OCI-LY7 (cell line): ENCODE measurements at regions of chr12 and their contacts with region 1.

Region 1: DNA sequence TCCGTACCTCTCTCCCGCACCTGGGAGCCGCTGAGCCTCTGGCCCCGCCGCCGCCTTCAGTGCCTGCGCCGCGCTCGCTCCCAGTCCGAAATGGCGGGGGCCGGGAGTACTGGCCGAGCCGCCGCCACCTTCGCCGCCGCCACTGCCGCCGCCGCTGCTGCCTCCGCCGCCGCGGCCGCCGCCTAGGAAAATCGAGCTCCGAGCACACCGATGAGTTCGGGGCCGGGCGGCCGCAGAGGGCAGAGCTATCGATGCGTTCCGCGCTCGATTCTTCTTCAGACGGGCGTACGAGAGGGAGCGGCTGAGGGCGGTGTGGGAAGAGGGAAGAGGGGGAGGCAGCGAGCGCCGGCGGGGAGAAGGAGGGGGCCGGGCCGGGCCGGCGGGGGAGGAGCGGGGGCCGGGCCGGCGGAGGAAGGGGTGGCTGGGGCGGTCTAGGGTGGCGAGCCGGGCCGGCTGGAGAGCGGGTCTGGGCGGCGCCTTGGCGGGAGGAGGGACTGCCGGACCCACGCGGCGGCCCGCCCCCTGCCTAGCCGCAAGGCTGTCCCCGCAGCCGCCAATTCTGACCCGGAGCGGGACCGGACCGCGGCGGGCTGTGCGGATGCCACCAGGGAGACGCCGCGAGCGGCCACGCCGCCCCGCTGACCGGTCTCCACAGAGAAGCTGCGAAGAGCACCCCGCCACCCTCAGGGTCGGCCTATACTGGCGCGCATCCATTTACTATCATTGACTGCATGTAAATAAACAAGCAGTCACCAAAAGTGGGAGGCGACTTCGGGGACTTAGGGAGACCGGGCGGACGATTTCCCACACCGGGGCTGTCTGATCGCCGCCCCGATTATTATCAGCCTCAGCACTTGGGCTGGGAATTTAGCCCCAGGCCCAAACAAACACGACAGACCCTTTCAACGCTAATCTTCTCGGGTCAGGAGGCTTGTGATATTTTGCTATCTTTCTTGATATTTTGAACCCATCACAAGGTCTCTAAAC is at the start of gene KRAS:
- DNase-seq: peak; percentile 97
- H3K4me3 ChIP-seq: peak within 1 kb of the TSS; percentile 99
- H3K27ac ChIP-seq: peak within 1 kb of the TSS; percentile 55
- H3K4me1 ChIP-seq: peaks cover 56% of the 10 kb centered on the region
- CTCF ChIP-seq: no peak
- total RNA-seq, gene KRAS: 8.6 and 14.7 TPM in 2 replicates

Region 2: GRCh38 chr12:24948757-24949722 is 302.0 kb before region 1 on chr12 and contains the start of gene BCAT1:
- CTCF ChIA-PET with region 1: no interaction called
- POLR2A ChIA-PET with region 1: no interaction called
- intact Hi-C with region 1: loop called (anchors 2 kb)
- DNase-seq: peak; percentile 93
- H3K4me3 ChIP-seq: peak within 1 kb of the TSS; percentile 79
- H3K27ac ChIP-seq: peak within 1 kb of the TSS; percentile 70
- H3K4me1 ChIP-seq: peaks cover 59% of the 10 kb centered on the region
- CTCF ChIP-seq: peak; percentile 49; the same call in 1 of the 2 replicates
- total RNA-seq, gene BCAT1: 116 and 121 TPM in 2 replicates

Region 3: DNA sequence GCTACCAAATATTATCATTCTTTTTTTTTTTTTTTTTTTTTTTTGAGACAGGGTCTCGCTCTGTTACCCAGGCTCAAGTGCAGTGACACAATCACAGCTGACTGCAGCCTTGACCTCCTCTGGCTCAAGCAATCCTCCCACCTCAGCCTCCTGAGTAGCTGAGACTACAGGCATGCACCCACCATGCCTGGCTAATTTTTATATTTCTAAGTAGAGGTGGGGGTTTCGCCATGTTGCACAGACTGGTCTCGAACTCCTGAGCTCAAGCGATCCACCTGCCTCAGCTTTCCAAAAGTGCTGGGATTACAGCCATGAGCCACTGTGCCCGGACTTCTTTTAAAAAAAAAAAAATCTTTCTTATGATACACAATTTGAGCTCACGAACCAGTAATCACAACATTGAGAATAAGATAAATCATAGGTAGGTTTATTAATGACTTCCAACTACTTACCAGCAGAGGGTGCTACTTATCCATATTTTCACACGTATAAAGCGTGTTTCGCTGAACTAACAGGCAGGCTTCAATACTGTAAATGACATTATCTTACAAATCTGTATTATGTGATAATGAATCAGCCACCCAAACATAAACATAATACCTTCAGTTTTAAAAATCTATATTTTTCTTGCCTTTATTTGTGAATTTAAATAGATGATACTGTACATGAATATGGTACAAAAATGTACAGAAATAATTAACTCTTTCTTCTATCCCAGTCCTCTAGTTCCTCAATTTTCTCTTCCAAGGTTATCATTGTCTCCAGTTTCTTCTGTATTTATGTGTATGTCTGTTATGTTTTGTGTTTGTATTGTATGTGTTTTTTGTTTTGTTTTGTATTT is 259.6 kb before region 1 on chr12:
- CTCF ChIA-PET with region 1: no interaction called
- POLR2A ChIA-PET with region 1: no interaction called
- intact Hi-C with region 1: loop called (anchors 5 kb)
- DNase-seq: peak; percentile 90
- H3K4me3 ChIP-seq: no peak overlapping the region
- H3K27ac ChIP-seq: peak overlapping the region; percentile 73
- H3K4me1 ChIP-seq: peaks cover 58% of the 10 kb centered on the region
- CTCF ChIP-seq: peak; percentile 94

Region 4: GRCh38 chr12:25264114-25264513 is 13.1 kb after region 1 on chr12:
- CTCF ChIA-PET with region 1: no interaction called
- POLR2A ChIA-PET with region 1: interaction called, 21 read pairs
- intact Hi-C with region 1: no loop called
- DNase-seq: peak; percentile 12
- H3K4me3 ChIP-seq: peak overlapping the region; percentile 10
- H3K27ac ChIP-seq: peak overlapping the region; percentile 20
- H3K4me1 ChIP-seq: peaks cover 20% of the 10 kb centered on the region
- CTCF ChIP-seq: no peak

Region 5: DNA sequence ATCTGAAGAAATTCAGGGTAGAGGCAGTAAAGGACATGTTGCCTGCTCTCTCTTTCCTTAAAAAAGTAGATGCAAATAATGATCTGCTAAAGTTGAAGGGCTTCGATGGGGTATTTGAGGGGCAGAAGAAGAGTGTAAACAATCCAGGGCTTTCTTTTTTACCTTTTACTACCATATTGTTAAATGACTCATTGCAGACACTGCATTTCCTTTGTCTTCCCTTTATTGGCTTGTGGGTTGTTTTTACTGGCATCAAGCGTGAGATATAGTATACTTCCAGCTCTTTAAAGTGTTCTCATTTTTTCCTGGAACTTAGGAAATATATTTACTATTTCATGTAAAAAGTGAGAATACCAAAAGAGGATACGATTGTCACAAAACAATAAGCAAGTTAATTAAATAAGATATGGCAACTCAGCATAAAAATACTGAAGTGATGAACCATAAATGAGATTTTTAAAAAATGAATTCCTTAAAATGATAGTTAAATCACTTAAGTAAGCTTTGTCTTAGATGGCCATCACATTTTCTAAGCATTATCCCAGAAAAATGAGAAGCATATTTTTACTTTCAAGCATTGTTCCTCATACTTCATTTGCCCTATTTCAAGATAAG is 72.0 kb after region 1 on chr12:
- CTCF ChIA-PET with region 1: no interaction called
- POLR2A ChIA-PET with region 1: interaction called, 4 read pairs
- intact Hi-C with region 1: loop called (anchors 2 kb)
- DNase-seq: no peak
- H3K4me3 ChIP-seq: peak overlapping the region; percentile 4
- H3K27ac ChIP-seq: no peak overlapping the region
- H3K4me1 ChIP-seq: peaks cover 55% of the 10 kb centered on the region
- CTCF ChIP-seq: no peak